ENCODE measurements at regions of chr2 and their contacts with region 1.

Region 1: GRCh38 chr2:204177977-204178540 is 241.5 kb downstream of the ICOS start:
- DNase-seq: peak; percentile 55 to 65 (median 63)
- H3K4me3 ChIP-seq: no peak overlapping the region
- H3K4me3 Mint-ChIP-seq: no peak overlapping the region
- H3K27ac ChIP-seq: no peak overlapping the region
- H3K27ac Mint-ChIP-seq: no peak overlapping the region
- H3K4me1 ChIP-seq: no peaks in the 10 kb centered on the region
- H3K4me1 Mint-ChIP-seq: no peaks in the 10 kb centered on the region
- H3K27me3 ChIP-seq: no peaks in the 10 kb centered on the region
- H3K27me3 Mint-ChIP-seq: peaks cover 7 to 10% of the 10 kb centered on the region in 2 donors

Region 2: DNA sequence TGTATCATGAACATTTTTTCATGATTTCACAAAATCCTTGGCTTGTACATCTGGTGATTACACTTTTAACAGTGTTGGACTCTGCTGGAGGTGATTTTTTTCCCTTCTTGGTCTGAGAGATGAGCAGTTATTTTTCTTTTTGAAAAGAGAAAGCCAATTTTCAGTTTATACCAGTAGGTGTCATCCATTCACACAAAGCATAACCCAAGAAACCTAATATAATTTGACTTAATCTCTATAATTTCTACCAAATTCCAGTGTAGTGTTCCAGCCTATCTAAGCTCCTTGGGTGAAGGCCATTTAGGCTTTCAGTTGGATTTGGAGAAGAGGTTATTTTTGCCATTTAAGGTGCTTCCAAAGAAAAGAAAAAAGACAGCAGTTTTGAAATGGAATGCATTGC is 249.2 kb before region 1 on chr2:
- CTCF ChIA-PET with region 1: interaction called, 25 read pairs
- POLR2A ChIA-PET with region 1: no interaction called
- intact Hi-C with region 1: loop called (anchors 1 kb)
- DNase-seq: peak in 1 of 5 donors; percentile 45
- H3K4me3 ChIP-seq: no peak overlapping the region
- H3K4me3 Mint-ChIP-seq: no peak overlapping the region
- H3K27ac ChIP-seq: no peak overlapping the region
- H3K27ac Mint-ChIP-seq: peak overlapping the region in 1 of 7 donors; percentile 22
- H3K4me1 ChIP-seq: peaks cover 20% of the 10 kb centered on the region
- H3K4me1 Mint-ChIP-seq: peaks cover 15 to 41% (median 31%) of the 10 kb centered on the region in 4 donors
- H3K27me3 ChIP-seq: no peaks in the 10 kb centered on the region
- H3K27me3 Mint-ChIP-seq: peaks cover 1 to 2% of the 10 kb centered on the region in 2 donors

Region 3: DNA sequence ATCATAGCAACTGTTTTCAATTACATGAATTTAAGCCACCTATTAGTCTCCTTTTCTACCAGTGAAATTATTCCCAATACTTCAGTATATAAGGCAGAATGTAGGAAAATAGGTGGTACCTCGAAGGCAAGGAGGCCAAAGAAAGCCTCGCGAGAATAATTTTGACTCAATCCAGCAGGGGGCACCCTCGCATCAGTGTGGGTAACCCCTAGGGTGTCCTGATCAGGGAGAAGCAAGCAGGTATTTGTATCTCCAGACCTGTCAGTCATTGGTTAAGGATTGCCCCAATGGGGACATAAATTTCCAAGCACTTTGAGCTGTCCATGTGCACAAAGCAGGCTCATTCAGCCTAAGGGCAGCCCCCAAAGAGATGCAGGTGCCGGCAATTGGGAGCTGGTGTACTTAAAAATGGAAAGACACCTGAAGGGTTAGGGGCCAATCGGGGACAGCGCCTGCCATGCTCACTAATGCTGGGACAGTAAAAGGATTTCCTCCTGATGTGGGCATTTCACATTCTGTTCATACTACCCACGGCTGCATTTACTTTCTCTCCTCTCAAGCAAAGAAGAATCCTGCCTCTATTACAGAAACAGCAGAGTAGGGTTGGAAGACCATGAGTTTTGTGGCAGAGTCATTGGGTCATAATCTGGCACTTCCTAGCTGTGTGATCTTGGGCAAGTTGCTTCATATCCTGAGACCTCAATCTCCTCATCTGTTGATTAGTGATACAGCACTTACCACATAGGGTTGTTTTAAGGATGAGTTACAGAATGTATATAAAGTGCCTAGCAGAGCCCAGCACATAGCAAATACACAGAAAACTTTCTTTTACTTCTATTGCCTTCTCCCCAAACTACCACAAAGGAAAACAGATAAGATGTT is 105.4 kb before region 1 on chr2:
- CTCF ChIA-PET with region 1: interaction called, 65 read pairs
- POLR2A ChIA-PET with region 1: interaction called, 4 read pairs
- intact Hi-C with region 1: loop called (anchors 1 kb)
- DNase-seq: peak in 4 of 5 donors; percentile 34 to 45 (median 36)
- H3K4me3 ChIP-seq: no peak overlapping the region
- H3K4me3 Mint-ChIP-seq: no peak overlapping the region
- H3K27ac ChIP-seq: no peak overlapping the region
- H3K27ac Mint-ChIP-seq: no peak overlapping the region
- H3K4me1 ChIP-seq: no peaks in the 10 kb centered on the region
- H3K4me1 Mint-ChIP-seq: no peaks in the 10 kb centered on the region
- H3K27me3 ChIP-seq: no peaks in the 10 kb centered on the region
- H3K27me3 Mint-ChIP-seq: no peaks in the 10 kb centered on the region

Region 4: DNA sequence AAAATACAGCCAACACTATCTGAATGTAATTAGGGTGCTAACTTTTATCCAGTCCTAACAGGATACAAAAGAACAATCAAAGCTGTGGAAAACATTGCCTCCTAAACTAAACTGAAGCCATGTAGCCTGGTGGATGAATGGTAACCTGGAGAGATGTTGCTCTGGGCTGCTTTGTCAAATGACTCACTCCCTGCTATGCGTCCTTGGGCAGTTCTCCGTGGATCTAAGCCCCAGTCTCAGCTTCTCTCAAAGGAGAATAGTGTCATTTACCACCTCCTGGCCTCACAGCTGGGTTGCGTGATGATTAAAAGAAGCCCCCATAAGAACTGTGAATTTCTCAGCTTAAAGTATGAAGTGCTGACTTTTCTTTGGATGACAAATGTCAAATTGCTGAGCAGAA is 37.8 kb before region 1 on chr2:
- CTCF ChIA-PET with region 1: interaction called, 53 read pairs
- POLR2A ChIA-PET with region 1: no interaction called
- intact Hi-C with region 1: loop called (anchors 1 kb)
- DNase-seq: no peak
- H3K4me3 ChIP-seq: no peak overlapping the region
- H3K4me3 Mint-ChIP-seq: no peak overlapping the region
- H3K27ac ChIP-seq: no peak overlapping the region
- H3K27ac Mint-ChIP-seq: no peak overlapping the region
- H3K4me1 ChIP-seq: peaks cover 2% of the 10 kb centered on the region
- H3K4me1 Mint-ChIP-seq: peaks cover 0 to 3% (median 1%) of the 10 kb centered on the region in 4 donors
- H3K27me3 ChIP-seq: no peaks in the 10 kb centered on the region
- H3K27me3 Mint-ChIP-seq: peaks cover 0 to 5% of the 10 kb centered on the region in 2 donors

Region 5: DNA sequence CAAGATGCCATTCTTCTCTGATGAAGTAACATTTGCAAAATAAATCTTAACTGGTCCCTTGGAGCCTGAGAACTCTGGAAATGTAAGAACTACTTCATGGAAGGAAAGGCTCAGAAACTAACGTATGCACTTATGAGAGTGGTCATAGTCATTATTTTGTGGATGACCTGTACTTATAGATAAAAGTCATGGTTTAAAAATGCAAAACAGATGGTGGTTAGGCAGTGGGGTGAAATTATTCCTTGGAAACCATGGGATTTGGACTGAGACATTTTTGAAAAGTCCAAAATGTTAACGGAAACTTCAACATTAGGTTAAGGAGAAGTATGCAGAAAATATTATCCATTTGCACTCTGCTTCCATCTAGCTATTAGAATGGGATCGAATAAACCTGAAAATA is 18.5 kb before region 1 on chr2:
- CTCF ChIA-PET with region 1: interaction called, 33 read pairs
- POLR2A ChIA-PET with region 1: no interaction called
- intact Hi-C with region 1: no loop called
- DNase-seq: no peak
- H3K4me3 ChIP-seq: no peak overlapping the region
- H3K4me3 Mint-ChIP-seq: no peak overlapping the region
- H3K27ac ChIP-seq: no peak overlapping the region
- H3K27ac Mint-ChIP-seq: no peak overlapping the region
- H3K4me1 ChIP-seq: no peaks in the 10 kb centered on the region
- H3K4me1 Mint-ChIP-seq: no peaks in the 10 kb centered on the region
- H3K27me3 ChIP-seq: no peaks in the 10 kb centered on the region
- H3K27me3 Mint-ChIP-seq: peaks cover 8 to 10% of the 10 kb centered on the region in 2 donors

Region 6: GRCh38 chr2:204197336-204198005 is 19.4 kb after region 1 on chr2:
- CTCF ChIA-PET with region 1: interaction called, 13 read pairs
- POLR2A ChIA-PET with region 1: interaction called, 3 read pairs
- intact Hi-C with region 1: no loop called
- DNase-seq: no peak
- H3K4me3 ChIP-seq: no peak overlapping the region
- H3K4me3 Mint-ChIP-seq: no peak overlapping the region
- H3K27ac ChIP-seq: no peak overlapping the region
- H3K27ac Mint-ChIP-seq: no peak overlapping the region
- H3K4me1 ChIP-seq: no peaks in the 10 kb centered on the region
- H3K4me1 Mint-ChIP-seq: no peaks in the 10 kb centered on the region
- H3K27me3 ChIP-seq: peaks cover 4% of the 10 kb centered on the region
- H3K27me3 Mint-ChIP-seq: peaks cover 7 to 25% of the 10 kb centered on the region in 2 donors